ENCODE measurements at regions of chr17 and their contacts with region 1.

Region 1: DNA sequence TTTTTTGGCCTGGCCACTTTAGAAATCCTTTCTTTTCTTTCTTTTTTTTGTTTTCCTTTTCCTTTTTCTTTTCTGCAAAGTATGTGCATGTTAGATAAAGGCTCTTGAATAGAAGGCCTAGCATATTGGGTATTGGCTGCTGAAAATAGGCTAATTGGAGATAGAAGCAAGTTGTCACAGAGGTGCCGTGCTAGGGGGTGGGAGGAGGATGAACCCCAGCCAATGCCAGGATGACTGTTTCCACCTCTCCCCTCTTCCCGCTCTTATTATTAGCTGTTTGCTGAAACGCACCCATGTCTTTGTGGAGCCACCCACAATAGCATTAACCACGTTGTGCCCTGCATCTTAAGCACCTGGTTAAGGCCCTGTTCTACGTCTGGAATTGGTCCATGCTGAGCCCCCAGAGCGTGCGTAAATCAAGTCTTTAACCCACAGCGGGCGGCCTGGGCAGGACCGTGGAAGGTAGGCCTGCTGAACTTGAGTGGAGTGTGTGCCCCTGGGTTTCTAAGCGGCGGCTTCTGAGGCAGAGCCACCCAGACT is 123.6 kb downstream of the MSI2 start:
- DNase-seq: no peak
- ATAC-seq: no peak
- H3K4me3 ChIP-seq: no peak overlapping the region
- H3K4me3 Mint-ChIP-seq: no peak overlapping the region
- H3K27ac ChIP-seq: no peak overlapping the region
- H3K27ac Mint-ChIP-seq: no peak overlapping the region
- H3K4me1 ChIP-seq: no peaks in the 10 kb centered on the region
- H3K4me1 Mint-ChIP-seq: peaks cover 25% of the 10 kb centered on the region
- H3K27me3 ChIP-seq: no peaks in the 10 kb centered on the region
- H3K27me3 Mint-ChIP-seq: no peaks in the 10 kb centered on the region
- CTCF ChIP-seq: no peak

Region 2: GRCh38 chr17:56431736-56432135 is 948.2 kb before region 1 on chr17:
- CTCF ChIA-PET with region 1: no interaction called
- POLR2A ChIA-PET with region 1: no interaction called
- intact Hi-C with region 1: loop called in 1 of 2 experiments (anchors 10 kb)
- DNase-seq: no peak
- ATAC-seq: no peak
- H3K4me3 ChIP-seq: no peak overlapping the region
- H3K4me3 Mint-ChIP-seq: no peak overlapping the region
- H3K27ac ChIP-seq: no peak overlapping the region
- H3K27ac Mint-ChIP-seq: no peak overlapping the region
- H3K4me1 ChIP-seq: no peaks in the 10 kb centered on the region
- H3K4me1 Mint-ChIP-seq: no peaks in the 10 kb centered on the region
- H3K27me3 ChIP-seq: no peaks in the 10 kb centered on the region
- H3K27me3 Mint-ChIP-seq: peaks cover 20% of the 10 kb centered on the region
- CTCF ChIP-seq: no peak

Region 3: DNA sequence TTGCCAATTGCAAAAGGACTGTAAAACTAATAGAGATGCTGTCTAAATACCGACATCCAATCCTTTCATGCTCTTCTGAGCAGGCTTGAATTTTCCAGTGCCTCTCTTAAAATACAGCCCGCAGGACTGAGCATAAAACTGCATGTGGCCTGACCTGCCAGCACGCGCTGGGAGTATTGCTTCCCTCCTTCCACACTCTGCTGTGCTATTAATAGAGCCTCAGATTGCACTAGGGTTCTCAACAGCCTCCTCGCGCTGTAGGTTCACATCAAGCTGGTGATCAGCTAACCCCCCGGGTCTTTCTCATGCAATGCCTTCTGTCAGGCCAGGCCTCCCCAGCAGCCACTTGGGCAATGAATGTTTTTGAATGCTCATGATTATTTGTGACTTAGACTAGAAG is 137.8 kb before region 1 on chr17:
- CTCF ChIA-PET with region 1: no interaction called
- POLR2A ChIA-PET with region 1: no interaction called
- intact Hi-C with region 1: no loop called
- DNase-seq: no peak
- ATAC-seq: no peak
- H3K4me3 ChIP-seq: no peak overlapping the region
- H3K4me3 Mint-ChIP-seq: no peak overlapping the region
- H3K27ac ChIP-seq: no peak overlapping the region
- H3K27ac Mint-ChIP-seq: no peak overlapping the region
- H3K4me1 ChIP-seq: no peaks in the 10 kb centered on the region
- H3K4me1 Mint-ChIP-seq: peaks cover 2% of the 10 kb centered on the region
- H3K27me3 ChIP-seq: no peaks in the 10 kb centered on the region
- H3K27me3 Mint-ChIP-seq: peaks cover under 1% of the 10 kb centered on the region
- CTCF ChIP-seq: no peak

Region 4: DNA sequence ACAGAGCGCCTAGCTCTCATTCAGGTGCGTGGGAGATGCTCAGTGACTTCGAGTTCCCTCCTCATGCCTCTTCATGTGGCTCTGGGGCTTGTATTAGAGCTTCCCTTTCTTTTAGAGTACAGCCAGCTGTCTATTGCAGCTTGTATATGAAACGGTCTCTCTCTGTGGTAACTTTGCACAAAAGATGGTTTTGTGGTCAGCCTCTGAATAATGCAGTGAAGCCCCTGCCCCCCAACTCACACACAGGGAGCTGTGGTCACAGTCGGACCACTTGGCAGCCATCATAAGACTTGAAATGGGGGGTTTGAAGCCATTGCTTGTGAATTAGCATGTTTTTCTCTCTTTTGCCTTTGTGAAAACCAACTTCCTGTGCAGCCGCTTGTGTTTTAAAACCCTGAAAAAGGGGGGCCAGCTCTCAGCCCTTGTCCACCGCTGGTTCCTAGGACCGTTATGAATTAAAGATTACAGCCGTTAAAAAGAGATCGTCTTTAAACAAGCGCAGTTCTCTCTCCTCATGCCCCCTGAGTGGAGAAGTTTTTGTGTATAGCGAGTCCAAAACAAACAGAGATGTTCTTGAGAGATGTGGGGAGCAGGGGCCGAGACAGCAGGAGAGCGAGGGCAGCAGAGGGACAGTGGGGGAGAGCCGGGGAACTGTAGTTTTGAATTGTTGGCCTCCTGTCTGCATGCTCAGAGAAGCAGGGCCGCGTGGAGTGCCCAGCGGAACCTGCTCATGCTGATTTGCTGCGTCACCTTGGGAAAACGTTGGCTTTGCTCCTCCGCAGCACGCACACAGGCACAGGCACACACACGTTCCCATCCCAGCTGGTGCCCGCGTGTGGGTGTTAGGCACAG is 75.3 kb after region 1 on chr17:
- CTCF ChIA-PET with region 1: no interaction called
- POLR2A ChIA-PET with region 1: no interaction called
- intact Hi-C with region 1: no loop called
- DNase-seq: peak in 8 of 9 experiments; percentile 9 to 72 (median 46)
- ATAC-seq: peak; percentile 78
- H3K4me3 ChIP-seq: peak overlapping the region in 1 of 2 experiments; percentile 3
- H3K4me3 Mint-ChIP-seq: peak overlapping the region; percentile 71
- H3K27ac ChIP-seq: peak overlapping the region in 1 of 2 experiments; percentile 38
- H3K27ac Mint-ChIP-seq: peak overlapping the region; percentile 89
- H3K4me1 ChIP-seq: peaks cover 46% of the 10 kb centered on the region
- H3K4me1 Mint-ChIP-seq: peaks cover 66% of the 10 kb centered on the region
- H3K27me3 ChIP-seq: no peaks in the 10 kb centered on the region
- H3K27me3 Mint-ChIP-seq: no peaks in the 10 kb centered on the region
- CTCF ChIP-seq: no peak

Measured in CD8-positive, alpha-beta T cell (primary cell).